ENCODE measurements at regions of chr9 and their contacts with region 1.

Region 1: DNA sequence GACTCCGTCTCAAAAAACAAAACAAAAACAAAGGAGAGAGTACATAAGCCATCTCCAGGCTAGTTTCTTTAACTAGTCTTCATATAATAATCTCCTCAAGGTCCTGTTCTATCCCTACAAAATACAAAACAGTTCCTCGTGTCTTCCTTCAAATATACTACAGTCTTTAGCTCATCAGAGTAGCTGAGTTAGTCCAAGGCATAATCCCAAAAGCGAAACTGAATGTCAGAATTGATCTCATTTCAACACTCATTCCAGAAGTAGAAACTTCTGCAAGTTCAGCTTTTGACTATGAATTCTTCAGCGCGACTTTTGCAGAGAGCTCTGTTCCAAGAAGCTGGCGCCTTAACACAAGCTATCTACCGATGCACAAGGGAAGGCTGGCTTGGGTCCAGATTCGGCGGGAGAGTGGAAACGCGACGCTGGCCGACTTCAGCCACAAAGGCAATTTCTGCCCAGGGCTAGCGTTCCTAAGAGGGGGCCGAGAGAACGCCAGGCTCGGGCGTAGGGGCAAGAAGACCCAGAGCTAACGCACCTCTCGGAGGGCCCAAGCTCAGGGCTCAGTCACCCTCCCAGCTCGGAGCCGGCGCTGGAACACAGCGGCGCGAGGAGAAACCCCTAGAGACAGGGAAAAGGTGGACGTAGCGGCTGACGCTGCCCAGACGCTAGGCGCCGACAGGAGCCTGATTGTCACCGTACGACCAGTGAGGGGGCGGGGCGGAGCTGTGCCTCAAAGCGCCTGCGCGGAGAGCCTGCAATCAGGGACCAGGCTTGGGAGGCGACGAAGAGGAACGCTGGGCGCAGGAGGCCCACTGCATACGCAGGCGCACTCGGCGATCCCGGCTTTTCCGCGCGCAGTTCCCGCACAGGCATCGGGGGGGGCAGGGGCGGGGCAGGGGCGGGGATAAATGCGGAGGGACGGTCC is 469 bp upstream of the HSDL2 start:
- DNase-seq: peak; percentile 90 to 99 (median 96)
- ATAC-seq: peak; percentile 94 to 95 (median 95)
- H3K4me3 ChIP-seq: peak overlapping the region; percentile 83 to 86
- H3K4me3 Mint-ChIP-seq: peak overlapping the region; percentile 99 to 100 (median 99)
- H3K27ac ChIP-seq: peak overlapping the region; percentile 82
- H3K27ac Mint-ChIP-seq: peak overlapping the region; percentile 97 to 98
- H3K4me1 ChIP-seq: peaks cover 10 to 17% of the 10 kb centered on the region in 2 experiments
- H3K4me1 Mint-ChIP-seq: peaks cover 40 to 60% (median 49%) of the 10 kb centered on the region in 3 donors
- H3K27me3 ChIP-seq: no peaks in the 10 kb centered on the region
- H3K27me3 Mint-ChIP-seq: no peaks in the 10 kb centered on the region

Region 2: GRCh38 chr9:111482694-111483438 is 896.6 kb before region 1 on chr9:
- CTCF ChIA-PET with region 1: interaction called in 1 of 2 experiments, 4 read pairs
- POLR2A ChIA-PET with region 1: interaction called in 1 of 2 experiments, 10 read pairs
- DNase-seq: peak; percentile 13 to 66 (median 41)
- ATAC-seq: peak; percentile 41 to 56 (median 45)
- H3K4me3 ChIP-seq: peak overlapping the region; percentile 91 to 92
- H3K4me3 Mint-ChIP-seq: peak overlapping the region; percentile 81 to 85 (median 83)
- H3K27ac ChIP-seq: peak overlapping the region; percentile 80
- H3K27ac Mint-ChIP-seq: peak overlapping the region; percentile 77 to 83
- H3K4me1 ChIP-seq: peaks cover 7 to 9% of the 10 kb centered on the region in 2 experiments
- H3K4me1 Mint-ChIP-seq: peaks cover 32 to 38% (median 33%) of the 10 kb centered on the region in 3 donors
- H3K27me3 ChIP-seq: no peaks in the 10 kb centered on the region
- H3K27me3 Mint-ChIP-seq: peaks cover 2 to 5% of the 10 kb centered on the region in 2 donors

Region 3: DNA sequence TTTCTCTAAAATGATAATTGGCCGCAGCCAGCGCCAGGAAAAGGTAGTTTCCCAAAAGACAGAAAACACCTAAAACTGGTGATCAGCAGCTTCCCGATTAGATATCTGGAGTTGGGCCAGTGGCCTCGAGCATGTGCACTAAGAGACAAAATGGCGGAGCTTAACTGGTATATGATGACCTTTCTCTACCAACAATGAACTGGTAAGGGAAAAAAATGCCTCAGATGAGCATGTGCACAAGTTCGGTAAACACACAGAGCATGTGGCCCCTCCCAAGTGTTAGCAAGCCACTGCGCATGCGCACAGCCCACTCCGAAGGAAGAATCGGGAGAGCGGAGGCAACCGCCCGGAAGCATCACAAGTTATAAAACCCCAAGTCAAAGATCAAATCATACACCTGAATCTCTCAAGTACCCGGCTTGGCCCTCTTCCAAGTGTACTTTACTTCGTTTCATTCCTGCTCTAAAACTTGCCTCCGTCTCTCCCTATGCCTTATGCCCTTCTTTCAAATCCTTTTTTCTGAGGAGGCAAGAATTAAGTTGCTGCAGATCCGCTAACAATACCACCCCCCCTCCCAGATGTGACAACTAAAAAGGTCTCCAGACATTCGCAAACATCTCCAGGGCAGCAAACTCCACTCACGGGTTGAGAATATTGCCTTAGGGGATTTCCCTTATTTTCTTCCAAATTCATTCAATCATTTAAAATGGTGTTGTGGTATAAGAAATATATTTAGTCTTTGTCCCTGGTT is 31.0 kb before region 1 on chr9:
- CTCF ChIA-PET with region 1: no interaction called
- POLR2A ChIA-PET with region 1: no interaction called
- DNase-seq: peak; percentile 37 to 75 (median 56)
- ATAC-seq: peak; percentile 68 to 88 (median 84)
- H3K4me3 ChIP-seq: peak overlapping the region; percentile 12 to 29
- H3K4me3 Mint-ChIP-seq: peak overlapping the region; percentile 39 to 69 (median 63)
- H3K27ac ChIP-seq: no peak overlapping the region
- H3K27ac Mint-ChIP-seq: peak overlapping the region; percentile 51 to 70
- H3K4me1 ChIP-seq: peaks cover 0 to 8% of the 10 kb centered on the region in 2 experiments
- H3K4me1 Mint-ChIP-seq: peaks cover 12 to 15% (median 13%) of the 10 kb centered on the region in 3 donors
- H3K27me3 ChIP-seq: peaks cover 0 to 5% of the 10 kb centered on the region in 2 experiments
- H3K27me3 Mint-ChIP-seq: peaks cover 0 to 1% of the 10 kb centered on the region in 2 donors

Region 4: DNA sequence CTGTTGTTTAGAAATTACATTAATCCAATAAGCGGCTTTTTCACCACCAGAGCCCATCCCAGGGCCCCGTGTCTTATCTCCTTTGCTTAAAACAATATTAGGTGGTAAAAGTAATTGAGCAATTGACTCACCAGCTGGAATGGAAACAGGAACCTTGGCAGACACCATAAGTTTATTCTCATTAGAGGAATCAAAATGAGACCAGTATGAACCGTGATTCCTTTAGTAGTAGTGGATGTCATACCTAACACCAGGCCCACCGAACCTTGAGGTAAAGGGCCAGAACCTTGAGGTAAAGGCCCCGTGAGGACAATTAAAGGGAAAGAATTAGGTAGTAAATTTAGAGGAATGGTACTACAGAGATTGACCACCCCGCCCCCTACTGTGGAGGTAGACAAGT is 17.0 kb after region 1 on chr9:
- CTCF ChIA-PET with region 1: no interaction called
- POLR2A ChIA-PET with region 1: no interaction called
- DNase-seq: no peak
- ATAC-seq: no peak
- H3K4me3 ChIP-seq: no peak overlapping the region
- H3K4me3 Mint-ChIP-seq: no peak overlapping the region
- H3K27ac ChIP-seq: no peak overlapping the region
- H3K27ac Mint-ChIP-seq: no peak overlapping the region
- H3K4me1 ChIP-seq: no peaks in the 10 kb centered on the region
- H3K4me1 Mint-ChIP-seq: no peaks in the 10 kb centered on the region
- H3K27me3 ChIP-seq: no peaks in the 10 kb centered on the region
- H3K27me3 Mint-ChIP-seq: no peaks in the 10 kb centered on the region

Region 5: GRCh38 chr9:112493393-112494137 is 114.1 kb after region 1 on chr9:
- CTCF ChIA-PET with region 1: no interaction called
- POLR2A ChIA-PET with region 1: no interaction called
- DNase-seq: no peak
- ATAC-seq: no peak
- H3K4me3 ChIP-seq: no peak overlapping the region
- H3K4me3 Mint-ChIP-seq: no peak overlapping the region
- H3K27ac ChIP-seq: no peak overlapping the region
- H3K27ac Mint-ChIP-seq: no peak overlapping the region
- H3K4me1 ChIP-seq: no peaks in the 10 kb centered on the region
- H3K4me1 Mint-ChIP-seq: peaks cover 5 to 25% (median 17%) of the 10 kb centered on the region in 3 donors
- H3K27me3 ChIP-seq: no peaks in the 10 kb centered on the region
- H3K27me3 Mint-ChIP-seq: no peaks in the 10 kb centered on the region

Region 6: GRCh38 chr9:112717661-112718341 is 338.4 kb after region 1 on chr9 and contains the start of gene INIP:
- CTCF ChIA-PET with region 1: interaction called in 1 of 2 experiments, 4 read pairs
- POLR2A ChIA-PET with region 1: interaction called in 1 of 2 experiments, 16 read pairs
- DNase-seq: peak; percentile 92 to 99 (median 97)
- ATAC-seq: peak; percentile 91 to 96 (median 93)
- H3K4me3 ChIP-seq: peak within 1 kb of the TSS; percentile 76 to 97
- H3K4me3 Mint-ChIP-seq: peak within 1 kb of the TSS; percentile 83 to 98 (median 97)
- H3K27ac ChIP-seq: peak within 1 kb of the TSS; percentile 94
- H3K27ac Mint-ChIP-seq: peak within 1 kb of the TSS; percentile 98
- H3K4me1 ChIP-seq: peaks cover 8 to 20% of the 10 kb centered on the region in 2 experiments
- H3K4me1 Mint-ChIP-seq: peaks cover 19 to 33% (median 26%) of the 10 kb centered on the region in 3 donors
- H3K27me3 ChIP-seq: no peaks in the 10 kb centered on the region
- H3K27me3 Mint-ChIP-seq: no peaks in the 10 kb centered on the region
- total RNA-seq, gene INIP: 13.6 to 27.4 (median 22.6) TPM